PC-3 (cell line): ENCODE measurements at regions of chr4 and their contacts with region 1.

Region 1: GRCh38 chr4:32775032-32775431 is 2054.9 kb downstream of the PCDH7 start:
- DNase-seq: peak; percentile 69
- ATAC-seq: peak; percentile 81
- H3K4me3 ChIP-seq: no peak overlapping the region
- H3K27ac ChIP-seq: no peak overlapping the region
- H3K4me1 ChIP-seq: no peaks in the 10 kb centered on the region
- H3K27me3 ChIP-seq: no peaks in the 10 kb centered on the region
- CTCF ChIP-seq: peak; percentile 74

Region 2: GRCh38 chr4:32417113-32417704 is 357.8 kb before region 1 on chr4:
- CTCF ChIA-PET with region 1: interaction called, 3 read pairs
- POLR2A ChIA-PET with region 1: no interaction called
- intact Hi-C with region 1: loop called (anchors 1 kb)
- DNase-seq: peak; percentile 30
- ATAC-seq: no peak
- H3K4me3 ChIP-seq: no peak overlapping the region
- H3K27ac ChIP-seq: no peak overlapping the region
- H3K4me1 ChIP-seq: no peaks in the 10 kb centered on the region
- H3K27me3 ChIP-seq: no peaks in the 10 kb centered on the region
- CTCF ChIP-seq: peak; percentile 56

Region 3: DNA sequence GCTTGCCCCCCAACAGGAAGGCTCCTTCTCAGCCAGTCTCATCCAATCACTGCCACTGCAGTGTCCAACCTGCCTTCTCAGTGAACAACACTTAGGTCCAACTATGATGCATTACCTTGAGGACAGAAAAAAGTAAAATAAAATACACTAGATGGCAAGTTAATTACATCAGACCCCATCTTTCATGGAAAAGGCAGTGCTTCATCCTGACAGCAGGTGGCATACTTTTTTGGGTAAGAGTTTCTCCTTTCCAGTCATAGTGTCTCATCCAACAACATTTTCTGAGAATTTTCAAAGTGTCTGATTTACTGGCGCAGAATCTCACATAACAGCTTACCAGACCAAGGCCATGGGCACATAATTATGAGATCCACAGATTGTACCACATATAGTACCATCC is 312.1 kb before region 1 on chr4:
- CTCF ChIA-PET with region 1: no interaction called
- POLR2A ChIA-PET with region 1: no interaction called
- intact Hi-C with region 1: loop called (anchors 1 kb)
- DNase-seq: peak; percentile 47
- ATAC-seq: no peak
- H3K4me3 ChIP-seq: no peak overlapping the region
- H3K27ac ChIP-seq: no peak overlapping the region
- H3K4me1 ChIP-seq: peaks cover 9% of the 10 kb centered on the region
- H3K27me3 ChIP-seq: no peaks in the 10 kb centered on the region
- CTCF ChIP-seq: peak; percentile 68